ENCODE measurements at regions of chr15 and their contacts with region 1.

Region 1: GRCh38 chr15:64093627-64094417 is at the start of gene CIAO2A:
- DNase-seq: peak; percentile 95
- H3K4me3 Mint-ChIP-seq: peak within 1 kb of the TSS; percentile 88
- H3K27ac Mint-ChIP-seq: peak within 1 kb of the TSS; percentile 87
- H3K4me1 Mint-ChIP-seq: peaks cover 30% of the 10 kb centered on the region
- H3K27me3 Mint-ChIP-seq: no peaks in the 10 kb centered on the region
- CTCF ChIP-seq: no peak
- total RNA-seq, gene CIAO2A: 73.2 and 86.0 TPM in 2 replicates

Region 2: GRCh38 chr15:63712828-63713520 is 380.8 kb before region 1 on chr15:
- CTCF ChIA-PET with region 1: no interaction called
- intact Hi-C with region 1: no loop called
- DNase-seq: no peak
- H3K4me3 Mint-ChIP-seq: no peak overlapping the region
- H3K27ac Mint-ChIP-seq: no peak overlapping the region
- H3K4me1 Mint-ChIP-seq: no peaks in the 10 kb centered on the region
- H3K27me3 Mint-ChIP-seq: no peaks in the 10 kb centered on the region
- CTCF ChIP-seq: no peak

Region 3: GRCh38 chr15:64082757-64083156 is 11.1 kb before region 1 on chr15:
- CTCF ChIA-PET with region 1: interaction called, 10 read pairs
- intact Hi-C with region 1: no loop called
- DNase-seq: no peak
- H3K4me3 Mint-ChIP-seq: no peak overlapping the region
- H3K27ac Mint-ChIP-seq: no peak overlapping the region
- H3K4me1 Mint-ChIP-seq: no peaks in the 10 kb centered on the region
- H3K27me3 Mint-ChIP-seq: no peaks in the 10 kb centered on the region
- CTCF ChIP-seq: no peak

Region 4: DNA sequence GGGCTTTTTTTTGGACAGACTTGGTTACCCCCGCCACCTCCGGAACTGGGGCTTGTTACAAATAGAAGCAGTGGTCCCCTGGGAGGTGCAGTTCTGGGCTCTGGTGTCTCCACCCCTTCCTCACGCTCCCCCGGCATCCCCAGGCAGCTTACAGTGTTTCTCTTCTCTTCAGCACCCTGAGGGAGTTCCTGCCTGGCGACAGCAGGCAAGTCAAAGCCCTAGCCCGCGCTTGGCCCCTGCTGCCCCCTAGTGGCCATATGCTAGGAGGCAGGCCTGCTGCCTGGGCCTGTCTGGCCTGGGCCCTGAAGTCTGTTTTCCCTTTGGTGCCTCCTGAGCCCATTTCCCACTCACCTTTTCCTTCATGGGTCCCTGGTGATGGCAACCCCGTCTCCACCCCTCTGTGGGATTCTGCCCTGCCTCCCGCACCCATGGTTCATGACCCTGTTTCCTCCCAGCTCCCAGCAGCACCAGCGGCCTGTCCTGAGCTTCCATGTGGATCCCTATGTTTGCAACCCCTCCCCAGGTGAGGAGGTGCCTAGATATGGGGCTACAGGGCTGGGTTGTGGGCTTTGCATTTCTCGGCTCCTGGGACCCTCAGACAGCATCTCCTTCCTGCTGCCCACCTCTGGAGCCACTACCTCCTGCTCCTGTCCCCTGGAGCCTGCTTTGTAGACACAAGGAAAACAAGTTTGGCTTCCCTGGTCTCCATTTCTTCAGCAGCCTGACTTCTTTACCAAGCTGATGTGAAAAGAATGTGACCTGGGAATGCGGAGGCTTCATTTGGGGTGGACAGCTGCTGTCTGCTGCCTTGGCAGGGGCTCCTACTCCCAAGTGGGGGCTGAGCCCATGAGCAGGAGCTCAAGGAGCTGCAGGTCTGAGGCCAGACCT is 59.9 kb after region 1 on chr15:
- CTCF ChIA-PET with region 1: interaction called, 11 read pairs
- intact Hi-C with region 1: loop called (anchors 10 kb)
- DNase-seq: peak; percentile 98
- H3K4me3 Mint-ChIP-seq: peak overlapping the region; percentile 59
- H3K27ac Mint-ChIP-seq: peak overlapping the region; percentile 94
- H3K4me1 Mint-ChIP-seq: peaks cover 31% of the 10 kb centered on the region
- H3K27me3 Mint-ChIP-seq: peaks cover 13% of the 10 kb centered on the region
- CTCF ChIP-seq: peak; percentile 98

Region 5: DNA sequence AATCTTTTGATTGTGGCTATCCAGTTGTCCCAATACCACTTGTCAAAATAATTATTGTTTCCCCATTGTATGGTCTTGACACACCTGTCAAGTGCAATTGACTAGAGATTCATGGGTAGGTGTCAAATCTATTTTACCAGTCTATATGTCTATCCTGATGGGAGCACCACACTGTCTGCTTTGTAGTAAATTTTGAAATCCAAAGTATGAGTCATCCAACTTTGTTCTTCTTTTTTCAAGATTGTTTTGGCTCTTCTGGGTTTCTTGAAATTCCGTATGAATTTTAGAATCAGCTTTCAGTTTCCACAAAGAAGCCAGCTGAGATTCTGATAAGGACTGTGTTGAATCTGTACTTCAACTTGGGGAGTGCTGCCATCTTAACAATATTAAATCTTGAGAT is 190.2 kb after region 1 on chr15:
- CTCF ChIA-PET with region 1: no interaction called
- intact Hi-C with region 1: no loop called
- DNase-seq: no peak
- H3K4me3 Mint-ChIP-seq: no peak overlapping the region
- H3K27ac Mint-ChIP-seq: no peak overlapping the region
- H3K4me1 Mint-ChIP-seq: peaks cover 8% of the 10 kb centered on the region
- H3K27me3 Mint-ChIP-seq: no peaks in the 10 kb centered on the region
- CTCF ChIP-seq: no peak

Region 6: GRCh38 chr15:65887565-65887964 is 1793.7 kb after region 1 on chr15:
- CTCF ChIA-PET with region 1: no interaction called
- intact Hi-C with region 1: no loop called
- DNase-seq: no peak
- H3K4me3 Mint-ChIP-seq: no peak overlapping the region
- H3K27ac Mint-ChIP-seq: no peak overlapping the region
- H3K4me1 Mint-ChIP-seq: peaks cover 34% of the 10 kb centered on the region
- H3K27me3 Mint-ChIP-seq: no peaks in the 10 kb centered on the region
- CTCF ChIP-seq: no peak